ENCODE measurements at regions of chr3 and their contacts with region 1.

Region 1: DNA sequence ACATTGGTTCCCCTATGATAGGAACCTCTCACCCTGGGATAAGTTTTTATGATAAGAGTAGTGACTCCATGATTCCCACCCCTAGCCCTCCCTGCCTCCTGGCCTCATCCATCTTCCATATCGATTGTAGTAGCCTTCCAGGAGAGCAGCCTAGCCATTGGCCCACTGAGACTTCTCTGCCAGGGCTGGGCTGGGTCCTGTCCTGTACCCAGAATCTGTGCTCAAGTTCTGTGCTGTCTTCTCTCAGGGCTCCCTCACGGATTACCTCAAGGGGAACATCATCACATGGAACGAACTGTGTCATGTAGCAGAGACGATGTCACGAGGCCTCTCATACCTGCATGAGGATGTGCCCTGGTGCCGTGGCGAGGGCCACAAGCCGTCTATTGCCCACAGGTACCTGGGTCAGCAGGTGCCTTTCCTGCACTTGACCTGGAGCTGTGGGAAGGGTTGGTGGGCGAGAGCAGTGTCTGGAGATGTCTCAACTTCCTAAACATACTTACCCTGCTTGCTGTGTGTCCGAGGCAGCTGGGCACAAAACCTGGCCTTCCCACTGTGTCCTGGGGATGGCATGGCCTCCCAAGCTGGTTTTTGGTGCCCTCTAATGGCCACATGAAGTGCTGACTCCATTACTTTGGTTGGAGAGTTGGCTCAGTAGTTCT is 16.6 kb upstream of the EXOG start:
- DNase-seq: peak; percentile 75
- H3K4me3 Mint-ChIP-seq: no peak overlapping the region
- H3K27ac Mint-ChIP-seq: no peak overlapping the region
- H3K4me1 Mint-ChIP-seq: no peaks in the 10 kb centered on the region
- H3K27me3 Mint-ChIP-seq: no peaks in the 10 kb centered on the region
- CTCF ChIP-seq: peak; percentile 90

Region 2: DNA sequence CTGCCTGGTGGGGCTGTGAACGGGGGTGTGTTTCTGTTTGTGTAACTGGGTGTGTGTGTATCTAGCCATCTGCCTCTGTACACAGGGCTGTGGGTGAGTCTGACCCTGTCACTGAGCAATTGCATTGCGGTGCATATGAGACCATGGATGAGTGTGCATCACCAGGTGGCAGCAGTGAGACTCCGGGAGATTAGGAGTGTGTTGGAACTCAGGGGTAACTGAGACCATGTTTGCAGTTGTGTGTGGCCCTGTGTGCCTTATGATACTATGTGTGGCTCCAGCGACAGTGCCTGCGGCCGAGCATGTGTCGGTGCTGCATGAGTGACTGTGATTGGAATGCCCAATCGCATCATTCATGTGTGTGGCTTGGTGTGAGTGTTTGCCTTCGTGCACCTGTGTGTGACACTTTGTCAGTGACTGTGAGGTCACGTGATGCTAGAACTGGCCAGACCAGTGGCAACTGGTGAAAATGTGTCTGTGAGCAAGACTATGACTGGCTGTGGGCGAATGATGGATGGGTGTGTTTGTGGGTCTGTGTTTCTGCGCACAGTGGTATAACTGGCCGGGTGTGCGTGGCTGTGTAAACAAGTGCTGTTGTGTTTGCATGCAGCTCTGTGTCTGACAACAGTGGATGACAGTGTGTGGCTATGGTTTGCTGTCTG is 475.0 kb before region 1 on chr3:
- CTCF ChIA-PET with region 1: interaction called, 3 read pairs
- POLR2A ChIA-PET with region 1: no interaction called
- intact Hi-C with region 1: loop called (anchors 5 kb)
- DNase-seq: peak; percentile 81
- H3K4me3 Mint-ChIP-seq: no peak overlapping the region
- H3K27ac Mint-ChIP-seq: no peak overlapping the region
- H3K4me1 Mint-ChIP-seq: peaks cover 23% of the 10 kb centered on the region
- H3K27me3 Mint-ChIP-seq: no peaks in the 10 kb centered on the region
- CTCF ChIP-seq: peak; percentile 69

Region 3: GRCh38 chr3:38247366-38248035 is 232.1 kb before region 1 on chr3:
- CTCF ChIA-PET with region 1: interaction called, 8 read pairs
- POLR2A ChIA-PET with region 1: no interaction called
- intact Hi-C with region 1: loop called (anchors 5 kb)
- DNase-seq: peak; percentile 84
- H3K4me3 Mint-ChIP-seq: no peak overlapping the region
- H3K27ac Mint-ChIP-seq: peak overlapping the region; percentile 54
- H3K4me1 Mint-ChIP-seq: peaks cover 12% of the 10 kb centered on the region
- H3K27me3 Mint-ChIP-seq: no peaks in the 10 kb centered on the region
- CTCF ChIP-seq: peak; percentile 30

Region 4: GRCh38 chr3:38354588-38355330 is 124.8 kb before region 1 on chr3:
- CTCF ChIA-PET with region 1: interaction called, 18 read pairs
- POLR2A ChIA-PET with region 1: no interaction called
- intact Hi-C with region 1: no loop called
- DNase-seq: peak; percentile 92
- H3K4me3 Mint-ChIP-seq: peak overlapping the region; percentile 28
- H3K27ac Mint-ChIP-seq: peak overlapping the region; percentile 54
- H3K4me1 Mint-ChIP-seq: peaks cover 19% of the 10 kb centered on the region
- H3K27me3 Mint-ChIP-seq: no peaks in the 10 kb centered on the region
- CTCF ChIP-seq: no peak

Region 5: DNA sequence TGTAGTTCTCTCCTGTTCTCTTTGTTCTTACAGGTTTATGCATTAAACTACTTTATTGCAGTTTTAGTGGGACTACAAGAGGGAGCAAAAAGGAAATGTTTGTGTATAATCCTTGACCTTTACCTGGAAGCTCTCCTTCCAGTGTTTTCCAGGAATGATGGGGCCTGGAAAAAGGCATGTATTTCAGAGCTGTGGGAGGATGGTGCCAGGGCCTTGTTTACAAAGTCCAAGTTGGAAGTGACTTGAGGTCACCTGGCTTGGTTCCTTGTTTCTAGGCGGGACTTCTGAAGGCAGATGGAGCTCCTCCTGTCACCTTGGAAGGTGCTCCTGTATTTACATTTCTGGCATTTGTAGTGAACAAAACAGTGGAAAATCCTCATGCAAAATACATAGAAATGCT is 10.8 kb before region 1 on chr3:
- CTCF ChIA-PET with region 1: interaction called, 45 read pairs
- POLR2A ChIA-PET with region 1: interaction called, 5 read pairs
- intact Hi-C with region 1: no loop called
- DNase-seq: no peak
- H3K4me3 Mint-ChIP-seq: no peak overlapping the region
- H3K27ac Mint-ChIP-seq: no peak overlapping the region
- H3K4me1 Mint-ChIP-seq: no peaks in the 10 kb centered on the region
- H3K27me3 Mint-ChIP-seq: no peaks in the 10 kb centered on the region
- CTCF ChIP-seq: no peak

Region 6: GRCh38 chr3:38521391-38521987 is 41.9 kb after region 1 on chr3:
- CTCF ChIA-PET with region 1: interaction called, 11 read pairs
- POLR2A ChIA-PET with region 1: no interaction called
- intact Hi-C with region 1: no loop called
- DNase-seq: peak; percentile 76
- H3K4me3 Mint-ChIP-seq: no peak overlapping the region
- H3K27ac Mint-ChIP-seq: no peak overlapping the region
- H3K4me1 Mint-ChIP-seq: no peaks in the 10 kb centered on the region
- H3K27me3 Mint-ChIP-seq: no peaks in the 10 kb centered on the region
- CTCF ChIP-seq: peak; percentile 87